ENCODE measurements at regions of chr17 and their contacts with region 1.

Region 1: DNA sequence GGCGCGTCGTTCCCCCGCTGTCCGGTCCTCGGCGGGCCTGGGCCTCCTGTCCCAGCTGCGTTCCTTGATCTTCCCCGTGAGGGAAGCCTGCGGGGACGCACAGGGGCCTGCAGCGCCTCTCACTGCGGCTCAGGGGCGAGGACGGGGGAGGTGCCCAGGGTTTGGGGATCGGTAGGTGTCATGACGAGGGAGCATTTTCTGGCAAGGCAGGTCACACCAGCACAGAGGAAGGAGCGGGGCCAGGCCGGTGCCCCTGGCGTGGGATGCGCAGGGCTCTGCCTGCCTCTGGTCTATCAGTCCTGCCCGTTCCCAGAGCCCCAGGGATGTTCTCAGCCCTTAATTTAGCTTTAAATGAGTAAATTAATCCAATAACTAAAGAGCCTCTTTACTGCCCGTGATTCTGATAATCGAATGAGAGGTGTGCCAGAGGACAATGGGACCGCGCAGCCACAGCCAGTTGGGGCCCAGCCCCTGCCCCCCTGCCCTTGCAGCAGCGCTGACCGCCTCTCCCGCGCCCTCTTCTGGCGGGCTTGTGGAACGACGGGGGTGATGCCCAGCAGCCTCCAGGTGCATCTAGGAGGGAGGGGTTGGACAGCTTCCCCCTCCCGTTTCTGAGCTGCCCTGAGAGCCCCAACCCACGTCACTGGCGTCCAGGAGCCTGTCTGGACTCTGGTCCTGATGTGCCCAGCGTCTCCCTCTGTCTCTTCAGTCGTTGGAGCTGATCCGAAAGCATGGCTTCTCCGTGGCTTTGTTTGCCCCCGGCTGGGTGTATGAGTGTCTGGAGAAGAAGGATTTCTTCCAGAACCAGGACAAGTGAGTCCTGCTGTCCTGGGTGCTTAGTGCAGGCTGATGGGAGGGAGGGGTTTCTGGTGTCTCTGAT is 7.9 kb downstream of the ENGASE start:
- DNase-seq: peak; percentile 96
- H3K4me3 ChIP-seq: no peak overlapping the region; a peak in 1 of 4 replicates
- H3K27ac ChIP-seq: no peak overlapping the region; a peak in 1 of 4 replicates
- H3K4me1 ChIP-seq: peaks cover 0 to 13% of the 10 kb centered on the region in 2 experiments; a peak in 1 of 4 replicates
- H3K27me3 ChIP-seq: no peaks in the 10 kb centered on the region
- CTCF ChIP-seq: peak; percentile 98
- EP300 ChIP-seq: no peak
- RAD21 ChIP-seq: peak; percentile 78

Region 2: GRCh38 chr17:78933959-78934568 is 148.5 kb before region 1 on chr17:
- CTCF ChIA-PET with region 1: no interaction called
- POLR2A ChIA-PET with region 1: no interaction called
- DNase-seq: peak; percentile 86
- H3K4me3 ChIP-seq: peak overlapping the region; percentile 23 to 55
- H3K27ac ChIP-seq: peak overlapping the region; percentile 98
- H3K4me1 ChIP-seq: peaks cover 37 to 43% of the 10 kb centered on the region in 2 experiments
- H3K27me3 ChIP-seq: no peaks in the 10 kb centered on the region
- CTCF ChIP-seq: no peak
- EP300 ChIP-seq: peak in 1 of 2 experiments; percentile 66; a peak in 2 of 4 replicates
- RAD21 ChIP-seq: no peak

Region 3: GRCh38 chr17:79019632-79020584 is 62.6 kb before region 1 on chr17:
- CTCF ChIA-PET with region 1: interaction called, 86 read pairs
- POLR2A ChIA-PET with region 1: no interaction called
- DNase-seq: peak; percentile 81
- H3K4me3 ChIP-seq: no peak overlapping the region; a peak in 1 of 4 replicates
- H3K27ac ChIP-seq: no peak overlapping the region
- H3K4me1 ChIP-seq: peaks cover 3 to 12% of the 10 kb centered on the region in 2 experiments; a peak in 3 of 4 replicates
- H3K27me3 ChIP-seq: no peaks in the 10 kb centered on the region
- CTCF ChIP-seq: peak; percentile 99
- EP300 ChIP-seq: no peak
- RAD21 ChIP-seq: peak; percentile 98

Region 4: GRCh38 chr17:79027925-79028813 is 54.4 kb before region 1 on chr17:
- CTCF ChIA-PET with region 1: interaction called, 86 read pairs
- POLR2A ChIA-PET with region 1: interaction called, 7 read pairs
- DNase-seq: peak; percentile 92
- H3K4me3 ChIP-seq: peak overlapping the region in 1 of 2 experiments; percentile 19; a peak in 1 of 4 replicates
- H3K27ac ChIP-seq: peak overlapping the region; percentile 51 to 92; a peak in 3 of 4 replicates
- H3K4me1 ChIP-seq: peaks cover 33 to 59% of the 10 kb centered on the region in 2 experiments
- H3K27me3 ChIP-seq: no peaks in the 10 kb centered on the region
- CTCF ChIP-seq: peak; percentile 56
- EP300 ChIP-seq: peak; percentile 32 to 88; a peak in 3 of 4 replicates
- RAD21 ChIP-seq: peak; percentile 28

Region 5: DNA sequence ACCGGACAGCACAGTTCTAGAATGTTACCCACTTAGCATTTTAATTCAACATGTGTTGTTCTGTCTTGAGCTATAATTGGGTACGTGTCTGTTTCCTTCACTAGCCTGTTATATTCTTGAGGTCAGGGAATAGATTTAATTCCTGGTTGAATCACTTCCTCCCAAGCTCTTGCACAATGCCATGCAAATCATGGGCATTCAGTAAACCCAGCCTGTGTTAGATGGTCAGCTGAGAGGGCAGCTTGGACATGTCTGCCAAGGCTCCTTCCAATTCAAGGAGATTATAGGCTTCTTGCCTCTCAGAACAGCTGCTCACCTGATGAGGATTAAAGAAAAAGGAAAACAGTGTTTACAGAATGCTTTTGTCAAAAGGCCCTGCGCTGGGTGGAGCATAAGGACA is 46.0 kb before region 1 on chr17:
- CTCF ChIA-PET with region 1: interaction called, 34 read pairs
- POLR2A ChIA-PET with region 1: no interaction called
- DNase-seq: no peak
- H3K4me3 ChIP-seq: no peak overlapping the region
- H3K27ac ChIP-seq: peak overlapping the region; percentile 2 to 47; a peak in 2 of 4 replicates
- H3K4me1 ChIP-seq: peaks cover 10 to 16% of the 10 kb centered on the region in 2 experiments; a peak in 3 of 4 replicates
- H3K27me3 ChIP-seq: no peaks in the 10 kb centered on the region
- CTCF ChIP-seq: no peak
- EP300 ChIP-seq: no peak; a peak in 1 of 4 replicates
- RAD21 ChIP-seq: no peak

Region 6: DNA sequence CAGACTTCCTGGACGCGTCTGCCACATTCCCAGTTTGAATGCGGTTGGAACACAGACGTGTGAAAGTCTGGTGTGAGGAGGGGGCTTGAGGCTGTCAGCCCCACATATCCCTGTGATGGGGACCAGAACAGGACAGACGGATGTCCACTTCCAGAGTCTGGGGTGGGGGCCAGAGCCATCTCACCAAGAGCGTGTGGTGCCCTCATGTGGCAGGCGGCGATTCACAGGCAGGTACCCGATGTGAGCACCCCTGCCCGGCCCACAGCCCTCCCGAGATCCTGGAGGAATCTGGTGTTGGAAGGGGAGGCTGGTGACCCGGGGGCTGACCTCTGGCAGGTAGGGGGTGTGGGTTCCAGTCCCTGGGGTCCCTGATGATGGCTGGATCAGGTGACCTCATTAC is 43.6 kb after region 1 on chr17:
- CTCF ChIA-PET with region 1: interaction called, 80 read pairs
- POLR2A ChIA-PET with region 1: no interaction called
- DNase-seq: peak; percentile 87
- H3K4me3 ChIP-seq: no peak overlapping the region
- H3K27ac ChIP-seq: no peak overlapping the region
- H3K4me1 ChIP-seq: peaks cover 0 to 17% of the 10 kb centered on the region in 2 experiments; a peak in 1 of 4 replicates
- H3K27me3 ChIP-seq: peaks cover 68% of the 10 kb centered on the region
- CTCF ChIP-seq: peak; percentile 31
- EP300 ChIP-seq: no peak
- RAD21 ChIP-seq: peak; percentile 65

Region 7: GRCh38 chr17:79137015-79137788 is 54.7 kb after region 1 on chr17:
- CTCF ChIA-PET with region 1: interaction called, 22 read pairs
- POLR2A ChIA-PET with region 1: no interaction called
- DNase-seq: no peak
- H3K4me3 ChIP-seq: no peak overlapping the region
- H3K27ac ChIP-seq: no peak overlapping the region
- H3K4me1 ChIP-seq: peaks cover 0 to 23% of the 10 kb centered on the region in 2 experiments; a peak in 1 of 4 replicates
- H3K27me3 ChIP-seq: peaks cover 50% of the 10 kb centered on the region
- CTCF ChIP-seq: no peak
- EP300 ChIP-seq: no peak
- RAD21 ChIP-seq: no peak

Region 8: GRCh38 chr17:79160980-79161636 is 78.6 kb after region 1 on chr17:
- CTCF ChIA-PET with region 1: interaction called, 98 read pairs
- POLR2A ChIA-PET with region 1: no interaction called
- DNase-seq: no peak
- H3K4me3 ChIP-seq: no peak overlapping the region
- H3K27ac ChIP-seq: no peak overlapping the region
- H3K4me1 ChIP-seq: peaks cover 0 to 34% of the 10 kb centered on the region in 2 experiments; a peak in 2 of 4 replicates
- H3K27me3 ChIP-seq: peaks cover 39% of the 10 kb centered on the region
- CTCF ChIP-seq: no peak
- EP300 ChIP-seq: no peak
- RAD21 ChIP-seq: no peak

Region 9: GRCh38 chr17:79251829-79252228 is 169.3 kb after region 1 on chr17:
- CTCF ChIA-PET with region 1: no interaction called
- POLR2A ChIA-PET with region 1: no interaction called
- DNase-seq: no peak
- H3K4me3 ChIP-seq: no peak overlapping the region
- H3K27ac ChIP-seq: no peak overlapping the region
- H3K4me1 ChIP-seq: peaks cover 0 to 25% of the 10 kb centered on the region in 2 experiments; a peak in 1 of 4 replicates
- H3K27me3 ChIP-seq: peaks cover 4% of the 10 kb centered on the region
- CTCF ChIP-seq: no peak
- EP300 ChIP-seq: no peak
- RAD21 ChIP-seq: no peak

Region 10: DNA sequence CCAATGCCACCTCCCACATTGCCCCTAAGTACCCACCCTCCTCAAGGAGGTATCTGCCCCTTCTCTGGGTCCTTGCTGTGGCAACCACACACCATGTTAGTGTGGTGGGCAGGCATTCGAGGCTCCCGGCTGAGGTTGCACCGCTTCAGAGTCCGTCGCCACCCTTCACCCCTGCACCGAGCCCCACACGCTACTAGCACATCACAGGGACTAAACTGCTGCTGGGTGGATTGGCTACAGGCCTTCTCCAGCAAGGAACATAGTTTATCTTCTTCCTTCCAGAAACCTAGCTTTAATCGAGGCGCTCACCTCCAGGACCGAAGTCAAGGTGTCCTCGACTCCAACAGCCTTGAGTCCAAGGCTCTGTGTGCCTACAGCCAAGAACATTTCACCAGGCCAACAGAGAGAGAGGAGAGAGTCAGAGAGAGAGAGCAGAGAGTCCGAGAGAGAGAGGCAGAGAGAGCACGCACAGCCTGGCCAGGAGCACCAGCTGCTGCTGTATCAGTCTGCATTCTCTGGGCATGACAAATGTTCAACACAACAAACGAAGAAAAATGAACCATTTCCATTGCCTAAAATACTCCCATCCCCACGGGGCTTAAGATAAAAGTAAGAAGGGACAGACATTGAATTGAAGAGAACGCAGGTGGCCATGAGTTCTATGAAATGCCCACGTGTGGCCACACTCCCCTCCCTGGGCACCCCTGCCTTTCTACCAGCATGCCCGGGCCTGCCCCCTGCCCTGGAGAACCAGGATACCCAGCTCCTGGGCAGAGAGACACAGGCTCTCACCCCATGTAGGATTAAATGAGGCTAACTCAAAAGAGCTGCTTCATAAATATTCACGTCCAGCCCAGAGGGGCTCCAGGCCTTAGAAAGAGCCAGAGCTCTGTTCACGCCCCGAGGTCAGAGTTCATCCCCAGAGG is 433.4 kb after region 1 on chr17:
- CTCF ChIA-PET with region 1: no interaction called
- POLR2A ChIA-PET with region 1: no interaction called
- DNase-seq: no peak
- H3K4me3 ChIP-seq: no peak overlapping the region
- H3K27ac ChIP-seq: no peak overlapping the region
- H3K4me1 ChIP-seq: peaks cover 0 to 47% of the 10 kb centered on the region in 2 experiments; a peak in 1 of 4 replicates
- H3K27me3 ChIP-seq: no peaks in the 10 kb centered on the region
- CTCF ChIP-seq: no peak
- EP300 ChIP-seq: no peak
- RAD21 ChIP-seq: no peak